ENCODE measurements at regions of chr11 and their contacts with region 1.

Region 1: DNA sequence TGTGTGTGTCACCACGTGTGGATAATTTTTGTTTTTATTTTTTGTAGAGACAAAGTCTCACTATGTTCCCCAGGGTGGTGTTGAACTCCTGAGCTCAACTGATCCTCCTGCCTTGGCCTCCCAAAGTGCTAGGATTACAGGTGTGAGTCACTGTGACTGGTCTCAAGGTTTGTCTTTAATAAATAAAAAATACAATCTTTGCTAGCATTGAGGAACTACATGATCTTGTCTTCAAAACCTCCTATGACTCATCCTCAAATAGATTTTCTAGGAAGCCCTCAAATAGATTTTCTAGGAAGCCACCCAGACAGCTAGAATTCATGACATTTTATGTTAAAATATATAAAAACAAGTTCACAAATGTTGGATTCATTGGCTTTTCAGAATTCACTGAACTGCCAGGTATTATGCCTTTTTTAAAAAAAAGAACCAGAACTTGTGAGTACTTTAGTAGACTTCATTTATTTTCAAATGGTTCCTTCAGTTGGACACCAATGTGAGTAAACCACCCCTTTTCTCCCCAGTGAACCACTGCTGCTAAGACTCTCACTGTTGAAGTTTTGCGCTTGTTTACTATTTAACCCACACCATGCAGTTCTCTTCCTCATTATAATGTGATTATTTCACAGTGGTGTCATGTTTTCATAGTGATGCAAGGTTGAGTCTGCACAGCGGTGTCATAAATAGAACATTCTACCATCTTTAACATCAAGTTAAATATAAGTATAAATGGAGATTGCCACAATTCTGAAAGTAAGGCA is 303.9 kb downstream of the CASP12 start:
- DNase-seq: no peak
- ATAC-seq: peak in 1 of 4 experiments; percentile 35
- H3K4me3 ChIP-seq: no peak overlapping the region
- H3K4me3 Mint-ChIP-seq: no peak overlapping the region
- H3K27ac ChIP-seq: no peak overlapping the region
- H3K27ac Mint-ChIP-seq: peak overlapping the region in 1 of 2 donors; percentile 60
- H3K4me1 ChIP-seq: no peaks in the 10 kb centered on the region
- H3K4me1 Mint-ChIP-seq: peaks cover 0 to 5% (median 4%) of the 10 kb centered on the region in 3 donors
- H3K27me3 ChIP-seq: peaks cover 0 to 2% of the 10 kb centered on the region in 2 experiments
- H3K27me3 Mint-ChIP-seq: peaks cover 0 to 2% of the 10 kb centered on the region in 2 donors

Region 2: GRCh38 chr11:104487046-104487806 is 107.2 kb before region 1 on chr11:
- CTCF ChIA-PET with region 1: no interaction called
- POLR2A ChIA-PET with region 1: no interaction called
- DNase-seq: no peak
- ATAC-seq: no peak
- H3K4me3 ChIP-seq: no peak overlapping the region
- H3K4me3 Mint-ChIP-seq: no peak overlapping the region
- H3K27ac ChIP-seq: no peak overlapping the region
- H3K27ac Mint-ChIP-seq: no peak overlapping the region
- H3K4me1 ChIP-seq: no peaks in the 10 kb centered on the region
- H3K4me1 Mint-ChIP-seq: no peaks in the 10 kb centered on the region
- H3K27me3 ChIP-seq: no peaks in the 10 kb centered on the region
- H3K27me3 Mint-ChIP-seq: peaks cover 0 to 3% of the 10 kb centered on the region in 2 donors

Region 3: DNA sequence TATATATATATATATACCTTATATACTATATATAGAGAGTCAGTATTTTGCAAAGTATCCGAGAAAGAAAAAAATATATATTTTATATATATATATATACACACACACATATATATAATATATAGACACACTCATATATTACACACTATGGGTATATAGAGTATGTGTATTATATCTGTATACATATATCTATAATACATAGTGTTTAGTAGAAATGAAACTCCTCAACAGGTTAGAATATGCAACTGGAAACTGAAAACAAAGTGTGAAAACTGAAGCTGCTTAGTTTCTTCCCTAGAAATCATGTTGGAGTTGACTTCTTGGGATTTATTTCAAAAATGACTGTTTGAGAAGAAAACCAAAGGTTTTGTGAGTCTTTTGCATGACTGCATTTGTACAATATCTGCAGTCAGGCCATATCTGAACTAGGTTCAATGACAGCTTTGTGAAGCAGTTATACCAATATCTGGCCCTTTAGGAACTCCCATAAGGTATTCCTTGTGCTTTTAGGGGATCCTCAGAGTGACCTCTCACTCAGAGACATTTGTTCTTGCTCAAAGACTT is 19.8 kb after region 1 on chr11:
- CTCF ChIA-PET with region 1: no interaction called
- POLR2A ChIA-PET with region 1: no interaction called
- DNase-seq: no peak
- ATAC-seq: no peak
- H3K4me3 ChIP-seq: no peak overlapping the region
- H3K4me3 Mint-ChIP-seq: no peak overlapping the region
- H3K27ac ChIP-seq: no peak overlapping the region
- H3K27ac Mint-ChIP-seq: no peak overlapping the region
- H3K4me1 ChIP-seq: peaks cover 3 to 8% of the 10 kb centered on the region in 2 experiments
- H3K4me1 Mint-ChIP-seq: peaks cover 8 to 10% (median 9%) of the 10 kb centered on the region in 3 donors
- H3K27me3 ChIP-seq: no peaks in the 10 kb centered on the region
- H3K27me3 Mint-ChIP-seq: no peaks in the 10 kb centered on the region

Region 4: GRCh38 chr11:104713401-104713800 is 119.0 kb after region 1 on chr11:
- CTCF ChIA-PET with region 1: interaction called, 3 to 10 read pairs
- POLR2A ChIA-PET with region 1: no interaction called
- DNase-seq: no peak
- ATAC-seq: no peak
- H3K4me3 ChIP-seq: no peak overlapping the region
- H3K4me3 Mint-ChIP-seq: no peak overlapping the region
- H3K27ac ChIP-seq: no peak overlapping the region
- H3K27ac Mint-ChIP-seq: no peak overlapping the region
- H3K4me1 ChIP-seq: peaks cover 4 to 8% of the 10 kb centered on the region in 2 experiments
- H3K4me1 Mint-ChIP-seq: peaks cover 16 to 21% (median 20%) of the 10 kb centered on the region in 3 donors
- H3K27me3 ChIP-seq: no peaks in the 10 kb centered on the region
- H3K27me3 Mint-ChIP-seq: no peaks in the 10 kb centered on the region

Region 5: DNA sequence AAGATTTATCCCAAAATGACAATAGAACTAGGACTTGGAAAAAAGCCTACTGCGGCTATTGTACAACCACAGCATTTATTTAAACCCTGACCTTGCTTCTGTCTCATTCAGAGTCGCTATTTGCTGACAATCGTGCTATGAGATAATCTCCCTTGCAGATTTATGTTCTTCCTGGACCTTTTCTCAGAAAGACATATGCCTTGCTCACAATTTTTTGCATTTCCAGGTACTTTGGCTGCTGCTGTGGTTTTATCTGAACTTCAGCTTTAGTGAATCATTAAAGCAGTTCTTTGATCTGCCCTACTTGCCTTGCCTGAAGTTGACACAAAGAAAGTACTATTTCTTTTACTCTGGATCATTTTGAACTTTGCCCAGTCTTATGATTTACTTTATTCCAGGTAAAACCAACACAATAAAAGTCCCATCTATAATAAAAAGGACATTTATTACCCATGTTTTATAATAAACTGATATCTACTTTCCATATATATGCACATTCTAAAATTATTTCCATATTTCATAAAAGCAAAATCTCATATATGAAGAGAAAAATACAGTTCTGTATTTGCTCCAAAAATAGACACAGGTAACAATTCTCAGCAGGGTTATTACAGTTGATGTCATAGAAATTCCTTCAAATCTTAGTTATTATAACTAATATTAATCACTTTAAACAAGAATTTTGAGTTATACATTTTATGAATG is 608.6 kb after region 1 on chr11:
- CTCF ChIA-PET with region 1: no interaction called
- POLR2A ChIA-PET with region 1: no interaction called
- DNase-seq: peak in 1 of 35 experiments; percentile 6
- ATAC-seq: peak; percentile 58 to 80 (median 68)
- H3K4me3 ChIP-seq: no peak overlapping the region
- H3K4me3 Mint-ChIP-seq: peak overlapping the region in 1 of 3 donors; percentile 6
- H3K27ac ChIP-seq: no peak overlapping the region
- H3K27ac Mint-ChIP-seq: peak overlapping the region; percentile 44 to 62
- H3K4me1 ChIP-seq: no peaks in the 10 kb centered on the region
- H3K4me1 Mint-ChIP-seq: peaks cover 16 to 19% (median 17%) of the 10 kb centered on the region in 3 donors
- H3K27me3 ChIP-seq: no peaks in the 10 kb centered on the region
- H3K27me3 Mint-ChIP-seq: no peaks in the 10 kb centered on the region